Activated T-helper 1 cell treated with anti-CD3 and anti-CD28 coated beads, Interleukin-12 subunit alpha, Interleukin-12 subunit beta, Interleukin-2, Interleukin-4 antibody, amounts not matched to agents 30 ng/mL and 10 ng/mL and 1 ng/mL, durations not matched to agents 14 hours and 24 hours and 36 hours (primary cell): ENCODE measurements at regions of chr9 and their contacts with region 1.

Region 1: GRCh38 chr9:131762356-131762932 is 22.6 kb upstream of the RAPGEF1 start:
- DNase-seq: peak; percentile 62
- H3K4me3 Mint-ChIP-seq: no peak overlapping the region
- H3K27ac Mint-ChIP-seq: no peak overlapping the region
- H3K4me1 Mint-ChIP-seq: peaks cover 12% of the 10 kb centered on the region
- H3K27me3 Mint-ChIP-seq: peaks cover 35% of the 10 kb centered on the region

Region 2: GRCh38 chr9:131954299-131954698 is 191.9 kb after region 1 on chr9:
- intact Hi-C with region 1: loop called (anchors 1 kb)
- DNase-seq: no peak
- H3K4me3 Mint-ChIP-seq: no peak overlapping the region
- H3K27ac Mint-ChIP-seq: no peak overlapping the region
- H3K4me1 Mint-ChIP-seq: no peaks in the 10 kb centered on the region
- H3K27me3 Mint-ChIP-seq: no peaks in the 10 kb centered on the region